Activated B cell treated with CpG ODN at 0.5 μM for 24 hours (primary cell): ENCODE measurements at regions of chr3 and their contacts with region 1.

Region 1: DNA sequence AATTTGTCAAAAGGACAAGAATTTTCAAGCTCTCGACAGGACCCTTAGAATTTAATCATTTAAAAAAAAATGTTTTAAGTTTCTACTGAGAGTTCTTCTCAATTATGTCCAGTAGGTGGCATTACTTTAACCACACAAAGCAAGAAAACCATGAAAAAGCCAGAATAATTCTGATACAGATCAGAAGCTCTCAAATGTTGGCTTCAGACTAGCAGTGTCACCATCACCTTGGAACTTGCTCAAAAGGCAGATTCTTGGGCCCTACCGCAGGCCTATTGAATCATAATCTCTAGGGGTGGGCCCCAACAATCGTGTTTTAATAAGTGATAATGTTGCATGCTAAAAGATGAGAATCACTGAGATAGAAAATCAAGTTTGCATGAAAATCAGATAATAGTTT is 99.5 kb upstream of the KCNMB2 start:
- DNase-seq: no peak
- ATAC-seq: no peak
- H3K4me3 Mint-ChIP-seq: no peak overlapping the region
- H3K27ac Mint-ChIP-seq: no peak overlapping the region
- H3K4me1 Mint-ChIP-seq: no peaks in the 10 kb centered on the region
- H3K27me3 Mint-ChIP-seq: no peaks in the 10 kb centered on the region
- CTCF ChIP-seq: peak; percentile 28

Region 2: GRCh38 chr3:179071550-179072397 is 635.0 kb after region 1 on chr3 and contains the start of gene ZMAT3:
- CTCF ChIA-PET with region 1: no interaction called
- POLR2A ChIA-PET with region 1: no interaction called
- intact Hi-C with region 1: loop called (anchors 10 kb)
- DNase-seq: peak; percentile 82
- ATAC-seq: peak; percentile 74
- H3K4me3 Mint-ChIP-seq: peak within 1 kb of the TSS; percentile 96
- H3K27ac Mint-ChIP-seq: peak within 1 kb of the TSS; percentile 91
- H3K4me1 Mint-ChIP-seq: peaks cover 60% of the 10 kb centered on the region
- H3K27me3 Mint-ChIP-seq: no peaks in the 10 kb centered on the region
- CTCF ChIP-seq: no peak
- total RNA-seq, gene ZMAT3: 29.8 and 32.0 TPM in 2 replicates

Region 3: DNA sequence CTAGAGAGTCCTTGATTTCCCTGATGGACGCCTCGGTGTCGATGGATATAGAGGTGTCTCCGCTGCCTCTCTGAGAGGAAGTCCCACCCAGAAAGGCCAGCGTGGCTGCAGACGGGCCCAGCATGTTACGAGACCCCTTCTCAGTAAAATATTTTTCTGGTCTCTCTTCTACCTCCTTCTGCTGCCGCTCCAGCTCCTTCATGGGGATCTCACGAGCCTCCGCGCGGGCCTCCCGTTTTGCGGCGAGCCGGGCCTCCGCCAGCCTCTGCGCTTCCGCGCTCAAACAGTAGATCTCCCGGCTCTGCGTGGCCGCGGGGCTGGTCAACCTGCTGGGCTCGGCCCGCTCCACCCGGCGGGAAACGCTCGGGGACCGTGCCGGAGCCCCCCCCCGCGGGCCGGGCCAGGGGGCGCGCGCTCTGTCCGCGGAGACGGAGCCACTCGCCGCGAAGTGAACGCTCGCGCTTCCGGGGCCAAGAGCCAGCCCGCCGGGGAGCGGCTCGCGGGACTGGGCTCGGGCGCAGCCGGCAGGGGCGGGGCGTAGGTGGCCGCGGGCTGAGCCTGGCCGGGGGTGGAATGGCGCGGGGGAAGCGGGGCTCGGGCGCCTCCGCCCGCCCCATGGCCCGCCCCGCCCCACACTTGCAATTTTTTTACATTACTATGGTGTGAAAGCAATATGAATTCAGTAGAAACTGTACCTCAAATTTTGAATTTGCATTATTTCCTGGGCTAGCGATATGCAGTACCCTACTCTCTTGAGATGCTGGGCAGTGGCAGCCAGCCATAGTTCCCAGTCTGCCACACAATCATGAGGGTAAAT is 824.4 kb after region 1 on chr3:
- CTCF ChIA-PET with region 1: no interaction called
- POLR2A ChIA-PET with region 1: no interaction called
- intact Hi-C with region 1: no loop called
- DNase-seq: peak; percentile 75
- ATAC-seq: peak; percentile 88
- H3K4me3 Mint-ChIP-seq: peak overlapping the region; percentile 84
- H3K27ac Mint-ChIP-seq: peak overlapping the region; percentile 71
- H3K4me1 Mint-ChIP-seq: peaks cover 53% of the 10 kb centered on the region
- H3K27me3 Mint-ChIP-seq: no peaks in the 10 kb centered on the region
- CTCF ChIP-seq: no peak